Activated naive CD4-positive, alpha-beta T cell treated with anti-CD3 and anti-CD28 coated beads, Interleukin-2, amount 10 ng/mL, durations not matched to agents 7 days and 5 days (primary cell): ENCODE measurements at regions of chr19 and their contacts with region 1.

Region 1: GRCh38 chr19:12777217-12778016 is 2.1 kb upstream of the HOOK2 start:
- DNase-seq: peak; percentile 85
- H3K4me3 Mint-ChIP-seq: peak overlapping the region; percentile 80
- H3K27ac Mint-ChIP-seq: peak overlapping the region; percentile 77
- H3K4me1 Mint-ChIP-seq: peaks cover 51% of the 10 kb centered on the region
- H3K27me3 Mint-ChIP-seq: peaks cover 12% of the 10 kb centered on the region

Region 2: GRCh38 chr19:12766051-12766521 is 11.3 kb before region 1 on chr19:
- CTCF ChIA-PET with region 1: interaction called, 16 read pairs
- DNase-seq: peak; percentile 90
- H3K4me3 Mint-ChIP-seq: peak overlapping the region; percentile 38
- H3K27ac Mint-ChIP-seq: no peak overlapping the region
- H3K4me1 Mint-ChIP-seq: peaks cover 7% of the 10 kb centered on the region
- H3K27me3 Mint-ChIP-seq: peaks cover 8% of the 10 kb centered on the region

Region 3: DNA sequence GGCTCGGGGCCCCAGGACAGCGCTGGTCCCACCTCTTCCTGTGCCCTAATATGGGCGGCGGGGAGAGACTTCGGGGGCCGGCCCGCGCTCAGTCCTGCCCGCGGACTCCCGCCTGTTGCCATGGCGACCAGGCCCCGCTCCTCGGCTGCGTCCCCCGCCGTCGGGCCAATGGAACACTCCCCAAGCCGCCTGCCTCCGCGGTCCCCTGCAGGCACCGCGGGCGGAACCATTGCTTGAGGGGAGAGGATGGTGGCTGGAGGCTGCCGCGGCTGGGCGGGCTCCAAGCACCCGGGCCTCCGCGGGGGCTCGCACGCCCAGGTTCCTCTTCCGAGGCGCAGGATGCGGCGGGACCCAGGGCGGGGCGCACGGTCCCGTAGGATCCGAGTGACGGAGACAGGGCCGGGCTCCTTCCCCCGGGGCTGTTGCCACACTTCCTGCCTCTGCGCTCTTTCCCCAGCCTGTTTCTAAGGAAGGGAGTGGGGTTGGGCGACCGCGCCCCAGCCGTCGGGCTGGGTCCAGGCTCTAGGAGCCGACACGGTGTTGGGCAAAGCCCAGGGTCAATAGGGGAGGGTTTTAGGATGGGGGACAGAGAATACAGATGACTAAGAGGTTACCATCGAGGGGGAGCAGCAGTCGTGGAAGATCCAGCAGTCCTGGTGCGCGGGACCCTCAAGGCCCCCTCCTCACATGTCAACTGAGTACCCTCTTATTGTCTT is 12.6 kb after region 1 on chr19:
- CTCF ChIA-PET with region 1: interaction called, 706 read pairs
- DNase-seq: peak; percentile 95
- H3K4me3 Mint-ChIP-seq: peak overlapping the region; percentile 92
- H3K27ac Mint-ChIP-seq: peak overlapping the region; percentile 99
- H3K4me1 Mint-ChIP-seq: peaks cover 34% of the 10 kb centered on the region
- H3K27me3 Mint-ChIP-seq: peaks cover 7% of the 10 kb centered on the region

Region 4: DNA sequence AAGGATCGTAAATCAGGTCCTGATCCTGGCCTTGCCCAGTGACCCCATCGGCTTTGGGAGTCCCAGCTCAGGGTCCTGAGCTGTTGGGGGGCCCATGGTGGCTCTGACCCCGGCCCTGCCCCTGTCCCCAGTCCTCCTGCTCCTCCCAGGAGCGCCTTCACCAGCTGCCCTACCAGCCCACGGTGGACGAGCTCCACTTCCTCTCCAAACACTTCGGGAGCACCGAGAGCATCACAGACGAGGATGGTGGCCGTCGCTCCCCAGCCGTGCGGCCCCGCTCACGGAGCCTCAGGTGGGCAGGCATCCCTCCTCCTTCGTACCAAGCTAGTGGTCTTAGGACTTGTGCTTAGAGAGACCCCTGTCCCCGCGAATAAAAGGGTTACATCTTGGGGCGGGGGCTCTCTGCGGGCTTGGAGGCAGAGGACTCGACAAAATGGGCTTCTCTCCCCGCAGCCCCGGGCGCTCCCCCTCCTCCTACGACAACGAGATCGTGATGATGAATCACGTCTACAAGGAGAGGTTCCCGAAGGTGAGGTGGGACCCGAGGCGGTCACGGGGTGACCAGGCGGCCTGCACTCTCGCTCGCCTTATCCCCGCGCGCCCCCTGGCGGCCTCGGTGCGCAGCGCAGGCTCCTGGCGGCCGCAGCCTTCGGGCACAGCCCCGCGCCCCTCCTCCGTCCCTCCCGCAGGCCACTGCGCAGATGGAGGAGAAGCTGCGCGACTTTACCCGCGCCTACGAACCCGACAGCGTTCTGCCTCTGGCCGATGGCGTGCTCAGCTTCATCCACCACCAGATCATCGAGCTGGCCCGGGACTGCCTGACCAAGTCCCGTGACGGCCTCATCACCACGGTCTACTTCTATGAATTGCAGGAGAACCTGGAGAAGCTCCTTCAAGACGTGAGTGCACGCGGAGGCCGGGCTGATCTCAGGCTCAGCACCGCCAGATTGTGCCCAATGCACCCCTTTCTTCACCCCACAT is 70.0 kb after region 1 on chr19:
- CTCF ChIA-PET with region 1: interaction called, 20 read pairs
- DNase-seq: peak; percentile 87
- H3K4me3 Mint-ChIP-seq: peak overlapping the region; percentile 12
- H3K27ac Mint-ChIP-seq: no peak overlapping the region
- H3K4me1 Mint-ChIP-seq: peaks cover 9% of the 10 kb centered on the region
- H3K27me3 Mint-ChIP-seq: peaks cover 68% of the 10 kb centered on the region